Dendritic cell treated with granulocyte-macrophage colony-stimulating factor and Interleukin-4, amounts not matched to agents 40 ng/mL and 50 ng/mL, for 4 days (primary cell): ENCODE measurements at regions of chr19 and their contacts with region 1.

Region 1: DNA sequence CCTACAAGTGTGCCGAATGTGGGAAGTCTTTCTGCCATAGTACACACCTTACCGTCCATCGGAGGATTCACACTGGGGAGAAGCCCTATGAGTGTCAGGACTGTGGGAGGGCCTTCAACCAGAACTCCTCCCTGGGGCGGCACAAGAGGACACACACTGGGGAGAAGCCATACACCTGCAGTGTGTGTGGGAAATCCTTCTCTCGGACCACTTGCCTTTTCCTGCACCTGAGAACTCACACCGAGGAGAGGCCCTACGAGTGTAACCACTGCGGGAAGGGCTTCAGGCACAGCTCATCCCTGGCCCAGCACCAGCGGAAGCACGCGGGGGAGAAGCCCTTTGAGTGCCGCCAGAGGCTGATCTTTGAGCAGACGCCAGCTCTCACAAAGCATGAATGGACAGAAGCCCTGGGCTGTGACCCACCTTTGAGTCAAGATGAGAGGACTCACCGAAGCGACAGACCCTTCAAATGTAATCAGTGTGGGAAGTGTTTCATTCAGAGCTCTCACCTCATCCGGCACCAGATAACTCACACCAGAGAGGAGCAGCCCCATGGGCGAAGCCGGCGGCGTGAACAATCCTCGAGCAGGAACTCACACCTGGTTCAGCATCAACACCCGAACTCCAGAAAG is 10.3 kb upstream of the ERVK3-1 start:
- H3K4me3 Mint-ChIP-seq: no peak overlapping the region
- H3K27ac Mint-ChIP-seq: no peak overlapping the region
- H3K4me1 Mint-ChIP-seq: peaks cover 5% of the 10 kb centered on the region
- H3K27me3 Mint-ChIP-seq: no peaks in the 10 kb centered on the region

Region 2: GRCh38 chr19:58228585-58229254 is 66.1 kb before region 1 on chr19 and contains the start of gene ZNF544:
- intact Hi-C with region 1: loop called (anchors 5 kb)
- H3K4me3 Mint-ChIP-seq: peak within 1 kb of the TSS; percentile 95
- H3K27ac Mint-ChIP-seq: peak within 1 kb of the TSS; percentile 88
- H3K4me1 Mint-ChIP-seq: peaks cover 30% of the 10 kb centered on the region
- H3K27me3 Mint-ChIP-seq: no peaks in the 10 kb centered on the region